Activated CD8-positive, alpha-beta T cell treated with anti-CD3 and anti-CD28 coated beads for 36 hours (primary cell): ENCODE measurements at regions of chr4 and their contacts with region 1.

Region 1: GRCh38 chr4:72326692-72327632 is 242.1 kb downstream of the ADAMTS3 start:
- DNase-seq: no peak
- ATAC-seq: no peak
- H3K4me3 Mint-ChIP-seq: no peak overlapping the region
- H3K27ac Mint-ChIP-seq: no peak overlapping the region
- H3K4me1 Mint-ChIP-seq: no peaks in the 10 kb centered on the region
- H3K27me3 Mint-ChIP-seq: peaks cover 6% of the 10 kb centered on the region
- CTCF ChIP-seq: peak; percentile 54

Region 2: GRCh38 chr4:71595576-71596108 is 731.3 kb before region 1 on chr4:
- CTCF ChIA-PET with region 1: no interaction called
- POLR2A ChIA-PET with region 1: no interaction called
- intact Hi-C with region 1: no loop called
- DNase-seq: no peak
- ATAC-seq: no peak
- H3K4me3 Mint-ChIP-seq: no peak overlapping the region
- H3K27ac Mint-ChIP-seq: no peak overlapping the region
- H3K4me1 Mint-ChIP-seq: no peaks in the 10 kb centered on the region
- H3K27me3 Mint-ChIP-seq: peaks cover 1% of the 10 kb centered on the region
- CTCF ChIP-seq: no peak

Region 3: DNA sequence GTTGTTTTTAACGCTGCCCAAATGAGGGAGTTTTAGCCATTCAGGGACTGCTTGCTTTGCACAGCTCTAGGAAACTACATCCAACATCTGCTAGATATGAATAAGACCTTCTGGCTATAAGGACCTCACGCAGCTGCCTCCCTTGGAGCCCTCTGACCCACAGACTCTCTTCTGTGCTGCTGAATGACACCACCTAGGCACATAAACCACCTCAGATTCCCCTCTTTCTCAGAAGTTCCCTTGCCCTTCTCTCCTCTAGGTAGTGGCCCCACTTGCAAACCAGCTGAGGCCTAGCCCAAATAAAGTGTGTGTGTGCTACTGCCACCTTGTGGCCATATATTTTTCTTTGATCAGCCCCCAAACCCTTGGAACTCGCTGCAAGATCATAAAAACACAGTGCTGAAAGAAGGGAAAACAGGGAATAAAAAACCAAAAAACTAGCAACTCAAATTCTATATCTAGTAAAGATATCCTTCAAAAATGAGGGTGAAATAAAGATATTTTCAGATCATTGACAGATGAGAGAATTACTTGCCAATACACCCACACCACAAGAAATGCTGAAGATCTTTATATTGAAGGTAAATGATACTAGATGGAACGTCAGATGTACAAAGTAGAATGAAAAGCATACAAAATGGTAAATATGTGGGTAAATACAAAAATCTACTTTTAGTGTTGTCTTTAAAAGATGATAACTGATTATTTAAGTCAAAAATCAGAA is 23.8 kb before region 1 on chr4:
- CTCF ChIA-PET with region 1: interaction called, 12 read pairs
- POLR2A ChIA-PET with region 1: no interaction called
- intact Hi-C with region 1: no loop called
- DNase-seq: peak; percentile 54
- ATAC-seq: peak; percentile 74
- H3K4me3 Mint-ChIP-seq: no peak overlapping the region
- H3K27ac Mint-ChIP-seq: no peak overlapping the region
- H3K4me1 Mint-ChIP-seq: no peaks in the 10 kb centered on the region
- H3K27me3 Mint-ChIP-seq: no peaks in the 10 kb centered on the region
- CTCF ChIP-seq: peak; percentile 81

Region 4: DNA sequence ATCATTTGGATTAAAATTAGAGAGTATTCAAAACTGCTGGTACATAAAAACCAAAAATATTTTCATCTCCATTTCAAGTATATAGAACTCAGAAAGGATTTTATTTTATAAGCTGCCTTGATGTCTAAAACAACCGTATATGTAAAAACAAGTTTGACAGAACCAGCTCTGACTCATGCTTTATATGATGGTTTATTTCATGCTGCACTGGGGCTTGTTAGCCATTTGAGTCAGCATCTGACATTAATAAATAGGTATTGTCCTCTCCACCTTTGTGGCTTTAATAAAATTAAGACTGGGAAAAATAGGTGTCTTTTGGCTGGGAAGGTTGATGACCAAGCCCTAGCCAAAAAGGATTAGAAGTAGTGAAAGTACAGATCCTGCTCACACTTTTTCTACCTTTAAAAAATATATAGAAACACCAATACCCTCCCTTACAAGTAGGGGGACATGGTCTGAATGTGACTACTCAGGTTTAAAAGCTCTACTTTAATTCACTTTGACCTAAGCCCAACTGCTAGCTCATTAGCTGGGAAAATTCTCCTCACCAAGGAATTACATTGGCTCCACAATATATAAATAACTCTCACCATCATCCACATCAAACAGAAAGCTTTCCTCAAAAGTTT is 14.0 kb after region 1 on chr4:
- CTCF ChIA-PET with region 1: interaction called, 14 read pairs
- POLR2A ChIA-PET with region 1: no interaction called
- intact Hi-C with region 1: no loop called
- DNase-seq: no peak
- ATAC-seq: no peak
- H3K4me3 Mint-ChIP-seq: no peak overlapping the region
- H3K27ac Mint-ChIP-seq: no peak overlapping the region
- H3K4me1 Mint-ChIP-seq: no peaks in the 10 kb centered on the region
- H3K27me3 Mint-ChIP-seq: no peaks in the 10 kb centered on the region
- CTCF ChIP-seq: no peak

Region 5: DNA sequence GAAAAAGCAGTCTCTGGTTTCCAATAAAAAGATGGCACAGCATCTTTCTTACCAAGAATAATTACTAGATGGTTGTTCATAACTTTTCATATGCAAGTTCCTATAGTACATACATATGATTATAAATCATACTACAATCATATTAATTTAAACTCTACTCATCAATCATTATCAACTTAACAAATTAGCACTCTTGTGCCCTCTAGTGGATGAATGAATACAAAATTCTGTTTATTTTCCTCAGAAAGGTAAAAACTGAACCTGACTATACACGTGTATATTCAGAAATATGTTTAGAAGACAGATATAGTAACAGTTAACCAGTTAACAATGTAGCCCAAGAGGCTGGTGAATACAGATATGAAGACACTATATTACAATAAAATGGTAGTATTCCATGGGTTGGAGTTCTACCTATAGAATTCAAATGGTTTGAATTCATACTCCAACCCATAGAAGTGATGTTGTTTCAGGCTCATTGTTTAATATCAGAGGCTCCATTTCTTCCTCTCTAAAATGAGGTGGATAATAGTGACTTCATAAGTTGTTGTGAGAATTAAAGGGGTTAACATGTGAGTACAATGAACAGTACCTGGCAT is 142.0 kb after region 1 on chr4:
- CTCF ChIA-PET with region 1: interaction called, 3 read pairs
- POLR2A ChIA-PET with region 1: no interaction called
- intact Hi-C with region 1: loop called (anchors 5 kb)
- DNase-seq: no peak
- ATAC-seq: no peak
- H3K4me3 Mint-ChIP-seq: no peak overlapping the region
- H3K27ac Mint-ChIP-seq: no peak overlapping the region
- H3K4me1 Mint-ChIP-seq: no peaks in the 10 kb centered on the region
- H3K27me3 Mint-ChIP-seq: no peaks in the 10 kb centered on the region
- CTCF ChIP-seq: peak; percentile 67